ENCODE measurements at regions of chr4 and their contacts with region 1.

Region 1: DNA sequence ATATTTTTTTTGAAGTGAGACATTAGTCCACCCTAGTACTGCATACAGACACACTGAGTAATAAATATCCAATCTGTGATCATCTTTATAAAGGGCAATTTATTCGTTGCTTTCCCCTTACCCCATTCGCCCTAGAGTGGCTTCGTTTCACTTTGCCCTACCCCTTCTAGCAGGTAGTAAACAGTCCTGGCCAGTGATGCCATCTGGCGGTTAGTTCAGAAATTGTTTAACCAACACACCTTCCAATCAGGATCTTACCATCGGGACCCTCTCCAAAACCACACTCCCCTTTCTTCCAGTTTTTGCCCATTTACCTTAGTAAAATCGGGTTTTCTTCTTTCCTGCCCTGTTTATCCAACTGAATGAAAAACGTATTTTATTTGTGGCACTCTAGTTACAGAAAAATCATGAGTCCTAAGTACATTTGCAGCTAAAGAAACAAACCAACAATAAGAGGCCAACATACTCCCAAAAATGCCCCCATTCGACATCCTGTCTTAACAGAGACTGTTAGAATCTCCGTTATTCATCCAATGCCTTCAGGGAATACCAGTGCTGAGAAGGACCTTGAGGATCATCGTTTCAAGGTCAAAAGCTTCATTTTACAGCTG is 2.2 kb downstream of the PPA2 start:
- DNase-seq: peak; percentile 64
- H3K4me3 ChIP-seq: peak overlapping the region; percentile 34 to 89 (median 84)
- H3K27ac ChIP-seq: peak overlapping the region; percentile 83
- H3K4me1 ChIP-seq: peaks cover 7% of the 10 kb centered on the region
- H3K27me3 ChIP-seq: no peaks in the 10 kb centered on the region
- CTCF ChIP-seq: peak; percentile 59 to 75

Region 2: DNA sequence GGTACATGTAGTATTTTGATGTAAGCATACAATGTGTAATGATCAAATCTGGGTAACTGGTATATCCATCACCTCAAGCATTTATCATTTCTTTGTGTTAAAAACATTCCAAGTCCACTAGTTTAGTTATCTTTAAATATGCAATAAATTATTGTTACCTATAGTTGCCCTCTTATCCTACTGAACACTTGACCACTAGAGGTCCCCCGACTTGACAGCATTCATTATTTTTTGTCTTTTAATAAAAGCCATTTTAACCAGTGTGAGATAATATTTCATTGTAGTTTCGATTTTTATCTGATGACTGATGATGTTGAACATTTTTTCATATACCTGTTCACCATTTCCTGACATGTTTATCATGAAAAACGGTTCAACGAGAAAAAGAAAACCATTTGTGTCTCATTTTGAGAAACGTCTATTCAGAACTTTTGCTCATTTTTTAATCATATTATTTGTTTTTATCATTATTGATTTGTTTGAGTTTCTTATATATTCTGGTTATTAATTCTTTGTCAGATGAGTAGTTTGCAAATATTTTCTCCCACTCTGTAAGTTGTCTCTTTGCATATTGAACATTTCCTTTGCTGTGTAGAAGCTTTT is 778.0 kb before region 1 on chr4:
- CTCF ChIA-PET with region 1: no interaction called
- dilution Hi-C with region 1: no loop called
- in situ Hi-C with region 1: no loop called
- intact Hi-C with region 1: loop called (anchors 5 kb)
- DNase-seq: peak; percentile 21
- H3K4me3 ChIP-seq: no peak overlapping the region
- H3K27ac ChIP-seq: no peak overlapping the region
- H3K4me1 ChIP-seq: no peaks in the 10 kb centered on the region
- H3K27me3 ChIP-seq: no peaks in the 10 kb centered on the region
- CTCF ChIP-seq: peak; percentile 52 to 69

Region 3: DNA sequence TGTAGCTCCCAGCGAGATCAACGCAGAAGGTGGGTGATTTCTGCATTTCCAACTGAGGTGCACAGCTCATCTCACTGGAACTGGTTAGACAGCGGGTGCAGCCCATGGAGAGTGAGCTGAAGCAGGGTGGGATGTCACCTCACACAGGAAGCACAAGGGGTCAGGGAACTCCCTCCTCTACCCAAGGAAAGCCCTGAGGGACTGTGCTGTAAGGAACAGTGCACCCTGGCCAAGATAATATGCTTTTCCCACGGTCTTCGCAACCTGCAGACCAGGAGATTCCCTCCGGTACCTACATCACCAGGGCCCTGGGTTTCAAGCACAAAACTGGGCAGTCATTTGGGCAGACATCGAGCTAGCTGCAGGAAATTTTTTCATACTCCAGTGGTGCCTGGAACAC is 541.4 kb before region 1 on chr4:
- CTCF ChIA-PET with region 1: no interaction called
- dilution Hi-C with region 1: no loop called
- in situ Hi-C with region 1: no loop called
- intact Hi-C with region 1: loop called (anchors 1 kb)
- DNase-seq: no peak
- H3K4me3 ChIP-seq: no peak overlapping the region
- H3K27ac ChIP-seq: no peak overlapping the region
- H3K4me1 ChIP-seq: no peaks in the 10 kb centered on the region
- H3K27me3 ChIP-seq: no peaks in the 10 kb centered on the region
- CTCF ChIP-seq: no peak

Region 4: DNA sequence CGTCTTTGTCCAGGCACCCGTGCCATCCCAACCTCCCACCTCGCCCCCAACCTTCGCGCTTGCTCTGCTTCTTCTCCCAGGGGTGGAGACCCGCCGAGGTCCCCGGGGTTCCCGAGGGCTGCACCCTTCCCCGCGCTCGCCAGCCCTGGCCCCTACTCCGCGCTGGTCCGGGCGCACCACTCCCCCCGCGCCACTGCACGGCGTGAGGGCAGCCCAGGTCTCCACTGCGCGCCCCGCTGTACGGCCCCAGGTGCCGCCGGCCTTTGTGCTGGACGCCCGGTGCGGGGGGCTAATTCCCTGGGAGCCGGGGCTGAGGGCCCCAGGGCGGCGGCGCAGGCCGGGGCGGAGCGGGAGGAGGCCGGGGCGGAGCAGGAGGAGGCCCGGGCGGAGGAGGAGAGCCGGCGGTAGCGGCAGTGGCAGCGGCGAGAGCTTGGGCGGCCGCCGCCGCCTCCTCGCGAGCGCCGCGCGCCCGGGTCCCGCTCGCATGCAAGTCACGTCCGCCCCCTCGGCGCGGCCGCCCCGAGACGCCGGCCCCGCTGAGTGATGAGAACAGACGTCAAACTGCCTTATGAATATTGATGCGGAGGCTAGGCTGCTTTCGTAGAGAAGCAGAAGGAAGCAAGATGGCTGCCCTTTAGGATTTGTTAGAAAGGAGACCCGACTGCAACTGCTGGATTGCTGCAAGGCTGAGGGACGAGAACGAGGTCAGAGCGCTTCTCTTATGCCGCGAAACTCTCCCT is 325.2 kb before region 1 on chr4 and contains the start of gene TET2:
- CTCF ChIA-PET with region 1: no interaction called
- dilution Hi-C with region 1: no loop called
- in situ Hi-C with region 1: loop called (anchors 10 to 25 kb)
- intact Hi-C with region 1: loop called (anchors 1 kb)
- DNase-seq: peak; percentile 83
- H3K4me3 ChIP-seq: peak within 1 kb of the TSS; percentile 68 to 100 (median 85)
- H3K27ac ChIP-seq: peak within 1 kb of the TSS; percentile 91
- H3K4me1 ChIP-seq: peaks cover 9% of the 10 kb centered on the region
- H3K27me3 ChIP-seq: no peaks in the 10 kb centered on the region
- CTCF ChIP-seq: peak in 1 of 2 donors; percentile 2
- total RNA-seq, gene TET2: 16.4 to 18.0 TPM

Region 5: DNA sequence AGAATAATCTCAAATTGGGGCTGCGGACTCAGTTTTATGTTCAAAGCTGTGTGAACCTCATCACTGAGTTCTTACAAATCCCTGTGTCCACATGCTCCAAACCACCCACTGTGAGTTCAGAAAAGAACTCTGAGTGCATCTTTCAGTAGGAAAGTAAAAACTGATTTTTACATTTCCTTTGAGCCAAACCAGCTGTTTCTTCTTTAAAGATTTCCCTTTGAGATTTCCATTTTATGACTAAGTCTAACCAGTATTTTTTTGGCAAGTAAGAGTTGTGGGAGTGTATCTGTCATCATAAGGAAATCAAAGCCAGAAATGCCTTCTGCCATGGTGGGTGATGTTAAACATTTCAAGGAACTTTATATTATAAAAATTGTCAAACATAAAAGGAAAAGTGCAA is 225.0 kb before region 1 on chr4:
- CTCF ChIA-PET with region 1: no interaction called
- dilution Hi-C with region 1: no loop called
- in situ Hi-C with region 1: no loop called
- intact Hi-C with region 1: loop called (anchors 10 kb)
- DNase-seq: no peak
- H3K4me3 ChIP-seq: no peak overlapping the region
- H3K27ac ChIP-seq: no peak overlapping the region
- H3K4me1 ChIP-seq: no peaks in the 10 kb centered on the region
- H3K27me3 ChIP-seq: no peaks in the 10 kb centered on the region
- CTCF ChIP-seq: no peak

Region 6: GRCh38 chr4:105417624-105418023 is 54.0 kb before region 1 on chr4:
- CTCF ChIA-PET with region 1: no interaction called
- dilution Hi-C with region 1: no loop called
- in situ Hi-C with region 1: no loop called
- intact Hi-C with region 1: no loop called
- DNase-seq: no peak
- H3K4me3 ChIP-seq: no peak overlapping the region
- H3K27ac ChIP-seq: no peak overlapping the region
- H3K4me1 ChIP-seq: no peaks in the 10 kb centered on the region
- H3K27me3 ChIP-seq: no peaks in the 10 kb centered on the region
- CTCF ChIP-seq: no peak

Measured in mammary epithelial cell (primary cell).